ENCODE measurements at regions of chr9 and their contacts with region 1.

Region 1: DNA sequence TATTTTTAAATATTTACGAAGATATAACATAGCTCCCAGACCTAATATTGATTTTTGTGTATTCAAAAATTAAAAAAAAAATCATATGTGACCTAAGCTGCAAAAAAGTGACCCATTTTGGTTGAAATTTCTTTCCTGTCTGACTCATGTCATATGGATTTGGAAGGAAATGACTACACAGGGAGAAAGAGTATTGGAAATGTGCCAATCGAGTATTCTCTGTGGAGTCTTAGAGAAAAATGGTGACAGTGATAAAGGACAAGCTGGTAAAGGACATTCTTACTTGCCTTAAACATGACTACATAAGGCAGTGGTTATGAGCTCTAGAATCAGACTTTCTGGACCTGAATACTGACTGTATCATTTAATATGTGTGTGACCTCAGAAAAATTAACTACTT is 262.9 kb upstream of the PTPRD start:
- DNase-seq: no peak
- ATAC-seq: no peak
- H3K4me3 ChIP-seq: no peak overlapping the region
- H3K4me3 Mint-ChIP-seq: no peak overlapping the region
- H3K27ac ChIP-seq: no peak overlapping the region
- H3K27ac Mint-ChIP-seq: no peak overlapping the region
- H3K4me1 ChIP-seq: no peaks in the 10 kb centered on the region
- H3K4me1 Mint-ChIP-seq: no peaks in the 10 kb centered on the region
- H3K27me3 ChIP-seq: no peaks in the 10 kb centered on the region
- H3K27me3 Mint-ChIP-seq: no peaks in the 10 kb centered on the region

Region 2: GRCh38 chr9:10930081-10930480 is 54.3 kb after region 1 on chr9:
- CTCF ChIA-PET with region 1: no interaction called
- POLR2A ChIA-PET with region 1: no interaction called
- intact Hi-C with region 1: loop called in 1 of 2 experiments (anchors 10 kb)
- DNase-seq: no peak
- ATAC-seq: no peak
- H3K4me3 ChIP-seq: no peak overlapping the region
- H3K4me3 Mint-ChIP-seq: no peak overlapping the region
- H3K27ac ChIP-seq: no peak overlapping the region
- H3K27ac Mint-ChIP-seq: no peak overlapping the region
- H3K4me1 ChIP-seq: no peaks in the 10 kb centered on the region
- H3K4me1 Mint-ChIP-seq: no peaks in the 10 kb centered on the region
- H3K27me3 ChIP-seq: no peaks in the 10 kb centered on the region
- H3K27me3 Mint-ChIP-seq: no peaks in the 10 kb centered on the region

Measured in naive thymus-derived CD4-positive, alpha-beta T cell (primary cell).